ENCODE measurements at regions of chr17 and their contacts with region 1.

Region 1: DNA sequence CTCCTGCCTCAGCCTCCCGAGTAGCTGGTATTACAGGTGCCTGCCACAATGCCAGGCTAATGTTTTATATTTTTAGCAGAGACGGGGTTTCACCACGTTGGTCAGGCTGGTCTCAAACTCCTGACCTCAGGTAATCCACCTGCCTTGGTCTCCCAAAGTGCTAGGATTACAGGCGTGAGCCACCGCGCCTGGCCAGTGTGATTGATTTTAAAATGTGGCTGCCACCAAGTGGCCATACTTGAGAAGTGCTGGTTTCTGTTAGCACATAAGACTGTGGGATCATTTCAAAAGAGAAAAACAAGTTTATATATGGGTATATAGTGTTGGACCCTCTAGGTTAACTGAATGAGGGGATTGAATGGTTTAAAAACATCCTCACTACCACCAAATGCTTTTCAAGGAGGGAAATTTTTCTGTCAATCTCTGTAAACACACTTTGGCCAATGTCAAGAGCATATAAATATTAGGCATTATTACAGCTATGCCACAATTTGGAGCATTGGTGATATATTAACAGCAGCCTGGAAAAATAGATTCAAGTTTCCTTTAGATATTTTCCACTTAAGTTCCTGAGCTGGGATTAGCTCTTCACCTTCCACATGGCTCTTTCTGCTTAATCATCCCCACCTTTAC is 13.5 kb upstream of the DHRS13 start:
- H3K4me3 Mint-ChIP-seq: no peak overlapping the region
- H3K27ac Mint-ChIP-seq: no peak overlapping the region
- H3K4me1 Mint-ChIP-seq: no peaks in the 10 kb centered on the region
- H3K27me3 Mint-ChIP-seq: no peaks in the 10 kb centered on the region

Region 2: DNA sequence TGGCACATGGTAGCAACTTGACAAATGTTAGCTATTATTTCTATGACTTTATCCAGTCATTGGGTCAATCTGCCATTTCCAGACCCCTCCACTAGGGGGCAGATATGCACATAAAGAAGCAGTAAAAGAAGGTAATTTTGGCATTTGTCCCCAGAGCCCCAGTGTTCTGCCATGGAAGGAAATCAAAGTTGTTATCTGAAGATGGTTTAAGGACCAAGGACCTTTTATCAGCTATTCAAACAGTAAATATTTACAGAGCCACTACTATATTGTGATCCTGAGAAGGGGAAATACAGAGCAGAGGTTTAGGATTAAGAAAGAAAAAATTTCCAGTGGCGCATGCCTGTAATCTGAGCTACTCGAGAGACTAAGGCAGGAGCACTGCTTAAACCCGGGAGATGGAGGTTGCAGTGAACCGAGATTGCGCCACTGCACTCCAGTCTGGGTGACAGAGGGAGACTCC is 152.6 kb before region 1 on chr17:
- intact Hi-C with region 1: loop called (anchors 10 kb)
- H3K4me3 Mint-ChIP-seq: no peak overlapping the region
- H3K27ac Mint-ChIP-seq: no peak overlapping the region
- H3K4me1 Mint-ChIP-seq: peaks cover 19% of the 10 kb centered on the region
- H3K27me3 Mint-ChIP-seq: no peaks in the 10 kb centered on the region

Region 3: GRCh38 chr17:28849281-28849680 is 67.1 kb before region 1 on chr17:
- intact Hi-C with region 1: loop called (anchors 5 kb)
- H3K4me3 Mint-ChIP-seq: no peak overlapping the region
- H3K27ac Mint-ChIP-seq: no peak overlapping the region
- H3K4me1 Mint-ChIP-seq: peaks cover 10% of the 10 kb centered on the region
- H3K27me3 Mint-ChIP-seq: peaks cover 4% of the 10 kb centered on the region

Region 4: DNA sequence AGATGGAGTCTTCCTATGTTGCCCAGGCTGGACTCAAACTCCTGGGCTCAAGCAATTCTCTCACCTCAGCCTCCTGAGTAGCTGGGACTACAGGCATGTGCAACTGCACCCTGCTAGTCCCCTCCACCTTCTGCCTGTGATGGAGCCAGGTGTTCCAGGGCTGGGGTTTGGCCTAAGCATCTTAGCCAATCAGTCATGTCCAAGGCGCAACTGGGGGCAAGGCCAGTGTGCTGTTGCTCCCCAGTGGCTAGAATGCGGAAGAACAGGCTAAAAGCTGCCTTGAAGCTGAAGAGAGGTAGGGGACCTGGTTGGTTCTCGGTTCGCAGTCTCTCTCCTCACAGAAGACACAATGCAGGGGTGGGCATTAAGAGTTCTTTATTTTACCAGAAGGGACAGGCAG is 37.4 kb before region 1 on chr17:
- intact Hi-C with region 1: no loop called
- H3K4me3 Mint-ChIP-seq: no peak overlapping the region
- H3K27ac Mint-ChIP-seq: no peak overlapping the region
- H3K4me1 Mint-ChIP-seq: no peaks in the 10 kb centered on the region
- H3K27me3 Mint-ChIP-seq: no peaks in the 10 kb centered on the region